Head of caudate nucleus (tissue), 42 donors: ENCODE measurements at regions of chr9 and their contacts with region 1.

Region 1: GRCh38 chr9:137070201-137070905 is at the start of gene SAPCD2:
- DNase-seq: peak; percentile 78 to 94 (median 87)

Region 2: DNA sequence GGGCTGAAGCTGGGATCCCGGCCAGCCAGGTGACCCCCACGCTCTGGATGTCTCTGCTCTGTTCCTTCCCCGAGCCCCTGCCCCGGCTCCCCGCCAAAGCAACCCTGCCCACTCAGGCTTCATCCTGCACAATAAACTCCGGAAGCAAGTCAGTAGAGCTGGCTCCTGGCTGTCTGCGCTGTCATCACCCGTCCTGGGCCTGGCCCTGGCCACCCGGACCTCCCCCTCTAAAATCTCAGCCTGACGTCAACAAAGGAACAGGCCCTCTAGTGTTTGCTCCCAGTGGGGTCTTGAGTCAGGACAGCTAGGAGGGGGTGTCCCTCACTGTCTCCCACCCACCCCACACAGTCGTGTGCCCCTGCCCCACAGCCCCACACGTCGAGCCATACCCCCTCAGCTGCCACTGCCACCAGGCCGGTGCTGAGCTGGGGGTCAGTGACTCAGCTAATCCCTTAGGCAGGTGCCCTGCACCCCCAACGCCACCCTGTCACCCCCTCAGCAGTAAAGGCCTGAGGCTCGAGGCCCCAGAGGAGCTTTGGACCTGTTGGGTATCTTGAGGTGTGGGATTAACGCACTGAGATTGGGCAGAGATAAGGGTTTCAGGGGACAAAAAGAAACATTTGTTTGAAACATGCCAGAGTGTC is 88.6 kb before region 1 on chr9:
- intact Hi-C with region 1: no loop called
- DNase-seq: peak in 35 of 42 donors; percentile 48 to 88 (median 65)

Region 3: GRCh38 chr9:137046098-137046787 is 24.1 kb before region 1 on chr9 and contains the start of gene NPDC1:
- intact Hi-C with region 1: loop called (anchors 2 kb)
- DNase-seq: peak; percentile 61 to 91 (median 81)